Head of caudate nucleus (tissue), 42 donors: ENCODE measurements at regions of chr17 and their contacts with region 1.

Region 1: DNA sequence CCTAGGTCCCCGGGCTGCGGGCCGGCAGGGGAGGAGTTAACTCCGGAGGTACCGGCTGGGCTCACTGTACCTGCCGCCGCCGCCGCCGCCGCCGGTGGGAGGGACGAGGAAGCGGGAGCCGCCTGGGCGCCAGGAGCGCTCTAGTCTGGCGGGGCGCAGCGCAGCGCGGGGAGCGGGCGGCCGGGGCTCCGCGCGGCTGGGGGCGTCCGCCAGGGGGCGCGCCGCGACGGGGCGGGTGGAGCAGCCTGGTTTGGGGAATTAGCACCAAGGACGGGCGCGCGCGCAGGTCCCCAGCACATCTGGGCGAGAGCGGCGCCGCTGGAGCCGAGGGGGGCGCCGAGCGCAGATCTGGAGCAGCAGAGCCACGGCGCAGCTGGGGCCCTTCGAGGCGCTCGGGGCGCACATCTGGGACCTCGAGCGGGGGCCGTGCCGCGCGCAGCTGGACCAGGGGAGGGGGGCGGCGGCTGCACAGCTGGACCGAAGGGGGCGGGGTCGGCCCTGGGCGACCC is at the start of gene NXPH3:
- DNase-seq: peak in 36 of 42 donors; percentile 26 to 77 (median 56)

Region 2: GRCh38 chr17:49680314-49680713 is 104.7 kb after region 1 on chr17:
- intact Hi-C with region 1: loop called (anchors 5 kb)
- DNase-seq: no peak

Region 3: GRCh38 chr17:49730078-49730784 is 154.6 kb after region 1 on chr17:
- intact Hi-C with region 1: no loop called
- DNase-seq: peak in 38 of 42 donors; percentile 9 to 79 (median 43)